ENCODE measurements at regions of chr1 and their contacts with region 1.

Region 1: GRCh38 chr1:193221651-193222050 is 35.2 kb upstream of the B3GALT2 start:
- DNase-seq: no peak
- ATAC-seq: peak; percentile 61
- H3K4me3 ChIP-seq: no peak overlapping the region
- H3K27ac ChIP-seq: no peak overlapping the region
- H3K4me1 ChIP-seq: peaks cover 5% of the 10 kb centered on the region
- H3K27me3 ChIP-seq: no peaks in the 10 kb centered on the region
- CTCF ChIP-seq: no peak
- POLR2A ChIP-seq: no peak
- RAD21 ChIP-seq: no peak

Region 2: GRCh38 chr1:192860478-192861185 is 361.0 kb before region 1 on chr1:
- CTCF ChIA-PET with region 1: no interaction called
- POLR2A ChIA-PET with region 1: no interaction called
- dilution Hi-C with region 1: no loop called
- in situ Hi-C with region 1: no loop called
- intact Hi-C with region 1: no loop called
- DNase-seq: no peak
- ATAC-seq: no peak
- H3K4me3 ChIP-seq: no peak overlapping the region
- H3K27ac ChIP-seq: no peak overlapping the region
- H3K4me1 ChIP-seq: no peaks in the 10 kb centered on the region
- H3K27me3 ChIP-seq: no peaks in the 10 kb centered on the region
- CTCF ChIP-seq: no peak
- POLR2A ChIP-seq: no peak
- RAD21 ChIP-seq: no peak

Region 3: GRCh38 chr1:193256019-193256418 is 34.4 kb after region 1 on chr1:
- CTCF ChIA-PET with region 1: no interaction called
- POLR2A ChIA-PET with region 1: no interaction called
- dilution Hi-C with region 1: no loop called
- in situ Hi-C with region 1: no loop called
- intact Hi-C with region 1: loop called (anchors 5 kb)
- DNase-seq: no peak
- ATAC-seq: no peak
- H3K4me3 ChIP-seq: no peak overlapping the region
- H3K27ac ChIP-seq: no peak overlapping the region
- H3K4me1 ChIP-seq: peaks cover 3% of the 10 kb centered on the region
- H3K27me3 ChIP-seq: no peaks in the 10 kb centered on the region
- CTCF ChIP-seq: no peak
- POLR2A ChIP-seq: no peak
- RAD21 ChIP-seq: no peak